ENCODE measurements at regions of chr16 and their contacts with region 1.

Region 1: DNA sequence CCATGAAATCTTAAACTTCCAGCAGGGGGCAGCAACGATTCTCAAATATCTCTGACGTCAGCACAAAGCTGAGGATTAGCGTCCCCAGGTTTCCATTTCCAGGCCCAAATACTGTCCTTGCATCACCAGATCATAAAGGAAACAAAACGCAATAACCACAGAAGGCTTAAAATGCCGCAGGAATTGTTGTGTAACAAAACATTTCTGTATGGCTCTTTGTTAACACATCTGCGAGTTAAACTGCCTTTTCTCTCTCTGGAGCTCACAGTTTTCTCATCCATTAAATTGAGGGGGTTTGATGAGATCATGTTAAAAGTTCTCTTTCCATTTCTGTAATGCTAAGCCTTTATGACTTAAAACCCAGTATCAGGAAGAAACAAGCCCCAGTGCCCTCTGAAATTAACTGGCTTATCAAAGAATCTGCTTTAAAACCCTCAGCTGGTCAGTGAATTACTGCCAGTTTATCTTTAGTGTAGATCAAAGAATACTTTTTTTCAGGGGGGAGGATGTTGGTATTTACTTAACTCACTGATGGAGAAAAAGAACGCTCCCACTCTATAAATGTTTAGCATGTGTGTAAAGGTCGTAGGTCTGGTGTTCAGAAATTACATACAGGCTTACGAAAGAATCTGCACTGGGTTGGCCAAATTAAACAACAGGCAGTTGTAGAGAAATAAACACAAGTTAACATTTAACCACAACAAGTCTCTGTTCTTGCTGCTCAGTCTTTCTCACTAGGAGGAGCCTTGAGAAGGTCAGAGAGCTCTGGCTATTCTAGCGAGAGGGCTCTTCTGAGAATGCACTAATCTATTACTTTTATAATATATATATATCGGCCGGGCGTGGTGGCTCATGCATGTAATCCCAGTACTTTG is 10.6 kb upstream of the TERF2 start:
- DNase-seq: peak; percentile 58 to 62 (median 62)
- ATAC-seq: peak; percentile 64 to 68
- H3K4me3 ChIP-seq: no peak overlapping the region
- H3K27ac ChIP-seq: peak overlapping the region; percentile 20
- H3K4me1 ChIP-seq: no peaks in the 10 kb centered on the region
- H3K27me3 ChIP-seq: no peaks in the 10 kb centered on the region

Region 2: GRCh38 chr16:69565671-69566239 is 169.3 kb after region 1 on chr16 and contains the start of gene NFAT5:
- intact Hi-C with region 1: loop called in 2 of 4 experiments (anchors 5 kb)
- DNase-seq: peak; percentile 85 to 95 (median 95)
- ATAC-seq: peak; percentile 92 to 94
- H3K4me3 ChIP-seq: peak within 1 kb of the TSS; percentile 85
- H3K27ac ChIP-seq: peak within 1 kb of the TSS; percentile 96
- H3K4me1 ChIP-seq: peaks cover 5% of the 10 kb centered on the region
- H3K27me3 ChIP-seq: no peaks in the 10 kb centered on the region
- total RNA-seq, gene NFAT5: 17.7 to 28.5 (median 23.5) TPM

Region 3: DNA sequence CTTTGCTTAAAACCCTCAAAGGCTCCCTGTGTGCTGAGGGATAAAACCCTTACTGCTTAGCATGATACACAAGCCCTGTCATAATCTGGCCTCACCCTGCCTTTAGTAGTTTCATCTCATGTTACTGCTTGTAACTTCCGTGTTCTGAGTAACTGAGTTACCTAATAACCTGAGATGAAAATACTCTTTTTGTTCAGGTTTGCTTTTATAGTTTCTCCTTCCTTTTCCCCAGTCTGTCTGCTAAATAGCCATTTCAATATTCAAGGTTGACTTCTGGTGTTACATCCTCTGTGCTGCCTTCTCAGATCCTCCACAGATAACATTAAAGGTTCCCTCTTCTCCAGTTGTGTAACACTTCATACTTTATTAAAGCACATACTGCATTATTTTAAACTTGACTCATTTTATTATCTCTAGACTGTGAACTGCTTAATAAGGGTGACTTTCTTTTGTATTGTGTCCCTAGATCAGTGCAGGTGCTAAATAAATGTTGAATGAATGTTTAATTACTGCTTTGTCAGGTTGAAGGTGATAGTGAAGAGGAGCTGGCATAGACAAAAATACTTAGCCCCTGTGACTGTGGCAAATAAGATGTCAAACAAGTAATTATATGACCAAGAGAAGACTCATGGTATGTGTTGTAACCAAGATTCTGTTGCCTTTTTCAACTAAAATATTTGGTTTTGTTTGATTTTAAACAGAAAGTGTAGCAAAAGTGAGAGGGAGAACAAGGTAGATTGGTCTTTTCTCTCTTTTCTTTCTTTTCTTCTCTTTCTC is 217.1 kb after region 1 on chr16:
- intact Hi-C with region 1: no loop called
- DNase-seq: no peak
- ATAC-seq: peak; percentile 35 to 54
- H3K4me3 ChIP-seq: no peak overlapping the region
- H3K27ac ChIP-seq: peak overlapping the region; percentile 58
- H3K4me1 ChIP-seq: peaks cover 15% of the 10 kb centered on the region
- H3K27me3 ChIP-seq: no peaks in the 10 kb centered on the region

Region 4: GRCh38 chr16:69754469-69755310 is 358.3 kb after region 1 on chr16 and contains the start of gene NOB1:
- intact Hi-C with region 1: loop called in 3 of 4 experiments (anchors 2 to 10 kb)
- DNase-seq: peak; percentile 97 to 99 (median 99)
- ATAC-seq: peak; percentile 98
- H3K4me3 ChIP-seq: peak within 1 kb of the TSS; percentile 78
- H3K27ac ChIP-seq: peak within 1 kb of the TSS; percentile 53
- H3K4me1 ChIP-seq: no peaks in the 10 kb centered on the region
- H3K27me3 ChIP-seq: no peaks in the 10 kb centered on the region
- total RNA-seq, gene NOB1: 18.2 to 23.7 (median 20.9) TPM

Measured in right cardiac atrium (tissue), 5 donors.